ENCODE measurements at regions of chr12 and their contacts with region 1.

Region 1: DNA sequence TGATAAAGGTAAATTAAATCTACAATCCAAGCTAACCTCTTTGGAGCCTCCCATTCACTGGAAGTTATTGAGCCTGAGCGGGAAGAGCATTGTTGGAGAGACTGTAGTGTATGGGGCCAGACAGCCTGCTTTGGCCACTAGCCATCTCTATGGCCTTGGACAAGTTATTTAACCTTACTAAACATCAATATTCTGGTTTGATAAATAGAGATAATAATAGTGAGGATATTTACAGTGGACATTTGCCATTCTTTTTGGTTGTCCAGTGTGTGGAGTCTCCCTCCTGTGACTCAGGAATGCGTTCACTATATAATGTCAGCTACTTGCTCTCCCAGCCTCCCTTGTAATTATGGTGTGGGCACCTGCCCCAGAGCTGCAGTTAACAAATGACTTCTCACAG is 216.1 kb downstream of the SLC38A4 start:
- DNase-seq: no peak
- ATAC-seq: no peak
- H3K4me3 ChIP-seq: no peak overlapping the region
- H3K27ac ChIP-seq: no peak overlapping the region
- H3K4me1 ChIP-seq: peaks cover 14% of the 10 kb centered on the region
- H3K27me3 ChIP-seq: no peaks in the 10 kb centered on the region
- CTCF ChIP-seq: no peak

Region 2: GRCh38 chr12:46430340-46430948 is 179.2 kb before region 1 on chr12:
- intact Hi-C with region 1: no loop called
- DNase-seq: no peak
- ATAC-seq: peak; percentile 83 to 91 (median 88)
- H3K4me3 ChIP-seq: no peak overlapping the region
- H3K27ac ChIP-seq: peak overlapping the region; percentile 68
- H3K4me1 ChIP-seq: peaks cover 26% of the 10 kb centered on the region
- H3K27me3 ChIP-seq: no peaks in the 10 kb centered on the region
- CTCF ChIP-seq: no peak

Region 3: GRCh38 chr12:46483572-46484395 is 125.9 kb before region 1 on chr12:
- intact Hi-C with region 1: no loop called
- DNase-seq: no peak
- ATAC-seq: no peak
- H3K4me3 ChIP-seq: no peak overlapping the region
- H3K27ac ChIP-seq: no peak overlapping the region
- H3K4me1 ChIP-seq: no peaks in the 10 kb centered on the region
- H3K27me3 ChIP-seq: no peaks in the 10 kb centered on the region
- CTCF ChIP-seq: no peak

Region 4: GRCh38 chr12:46562625-46563228 is 46.9 kb before region 1 on chr12:
- intact Hi-C with region 1: loop called (anchors 5 kb)
- DNase-seq: no peak
- ATAC-seq: peak; percentile 67 to 85 (median 78)
- H3K4me3 ChIP-seq: no peak overlapping the region
- H3K27ac ChIP-seq: peak overlapping the region; percentile 77
- H3K4me1 ChIP-seq: peaks cover 29% of the 10 kb centered on the region
- H3K27me3 ChIP-seq: no peaks in the 10 kb centered on the region
- CTCF ChIP-seq: no peak

Region 5: DNA sequence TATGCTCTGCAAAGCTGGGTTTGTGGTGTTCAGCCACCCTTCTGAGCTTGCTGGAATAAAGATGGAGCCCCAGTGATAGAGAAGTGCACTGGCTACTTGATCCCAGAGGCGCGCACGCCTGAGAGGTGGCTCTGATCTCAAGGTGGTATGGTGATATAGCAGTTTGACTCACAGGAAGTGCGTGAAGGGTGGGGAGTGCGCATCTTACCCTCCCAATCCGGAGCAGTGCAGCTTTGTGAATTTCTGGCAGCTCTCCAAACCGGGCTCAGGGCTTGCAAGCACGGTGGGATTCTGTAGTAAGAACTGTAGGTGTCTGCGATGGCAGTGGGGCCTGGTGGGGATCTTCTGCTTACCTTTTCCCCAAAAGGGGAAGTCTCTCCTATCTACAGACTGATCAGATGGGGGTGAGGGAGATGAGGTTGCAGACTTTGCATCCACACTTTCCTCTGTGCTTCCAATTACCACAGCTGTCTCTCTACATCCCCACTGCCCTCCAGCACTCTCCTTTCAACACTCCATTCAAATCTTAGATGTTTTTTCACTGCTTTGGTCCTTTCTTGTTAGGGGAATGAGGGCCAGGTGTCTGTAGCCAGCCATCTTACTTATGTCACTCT is 39.7 kb before region 1 on chr12:
- intact Hi-C with region 1: loop called in 1 of 2 experiments (anchors 5 kb)
- DNase-seq: no peak
- ATAC-seq: no peak
- H3K4me3 ChIP-seq: no peak overlapping the region
- H3K27ac ChIP-seq: no peak overlapping the region
- H3K4me1 ChIP-seq: peaks cover 9% of the 10 kb centered on the region
- H3K27me3 ChIP-seq: no peaks in the 10 kb centered on the region
- CTCF ChIP-seq: no peak

Region 6: GRCh38 chr12:46650607-46651088 is 41.0 kb after region 1 on chr12:
- intact Hi-C with region 1: no loop called
- DNase-seq: no peak
- ATAC-seq: no peak
- H3K4me3 ChIP-seq: no peak overlapping the region
- H3K27ac ChIP-seq: no peak overlapping the region
- H3K4me1 ChIP-seq: no peaks in the 10 kb centered on the region
- H3K27me3 ChIP-seq: no peaks in the 10 kb centered on the region
- CTCF ChIP-seq: no peak

Region 7: GRCh38 chr12:46763230-46763629 is 153.6 kb after region 1 on chr12:
- intact Hi-C with region 1: no loop called
- DNase-seq: no peak
- ATAC-seq: no peak
- H3K4me3 ChIP-seq: no peak overlapping the region
- H3K27ac ChIP-seq: no peak overlapping the region
- H3K4me1 ChIP-seq: no peaks in the 10 kb centered on the region
- H3K27me3 ChIP-seq: no peaks in the 10 kb centered on the region
- CTCF ChIP-seq: no peak

Measured in psoas muscle (tissue), 8 donors.